ENCODE measurements at regions of chr17 and their contacts with region 1.

Region 1: DNA sequence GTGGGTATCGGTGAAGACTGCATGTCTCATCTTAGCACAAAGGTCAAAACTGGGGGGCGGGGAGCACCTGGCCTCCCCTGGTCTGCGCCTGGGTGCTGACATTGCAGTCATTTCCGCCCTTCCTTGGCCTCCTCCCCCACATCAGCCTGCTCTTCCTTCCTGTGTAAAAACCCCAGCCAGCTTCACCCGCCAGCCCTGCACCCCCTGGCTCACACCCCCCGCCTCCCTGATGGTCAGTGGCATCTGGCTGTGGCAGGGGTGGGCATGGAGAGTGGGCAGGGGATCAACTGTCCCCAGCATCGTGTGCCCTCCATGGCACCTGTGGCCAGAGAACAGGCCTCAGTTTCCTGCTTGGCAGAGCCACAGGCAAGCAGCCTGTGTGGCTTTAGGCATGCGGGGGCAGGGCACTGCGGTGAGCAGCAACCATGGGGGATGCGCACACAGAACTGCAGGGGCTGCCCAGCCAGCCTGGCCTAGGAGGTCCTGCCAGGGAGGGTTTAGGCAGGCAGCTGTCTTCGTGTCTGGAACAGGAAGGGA is 26.5 kb upstream of the LASP1NB start:
- DNase-seq: peak; percentile 75
- H3K4me3 Mint-ChIP-seq: peak overlapping the region; percentile 74
- H3K27ac Mint-ChIP-seq: peak overlapping the region; percentile 94
- H3K4me1 Mint-ChIP-seq: peaks cover 58% of the 10 kb centered on the region
- H3K27me3 Mint-ChIP-seq: no peaks in the 10 kb centered on the region

Region 2: DNA sequence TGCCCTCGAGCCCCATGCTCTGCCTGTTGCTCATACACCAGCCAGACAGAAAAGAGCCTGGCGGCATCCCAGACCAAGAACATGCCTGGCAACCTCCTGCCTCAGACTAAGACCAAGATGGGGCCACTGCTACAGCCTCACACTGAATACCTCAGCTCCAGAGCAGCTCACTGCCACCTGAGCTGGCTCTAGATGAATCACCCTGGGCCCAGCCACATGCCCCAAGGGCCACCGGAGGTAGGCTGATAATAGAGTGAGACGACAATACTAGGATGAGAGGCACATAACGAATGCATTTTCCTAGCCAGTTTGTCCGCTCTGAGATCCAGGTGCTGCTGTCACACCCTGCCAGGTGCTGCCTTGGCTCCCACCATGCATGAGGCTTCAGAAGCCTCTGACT is 112.5 kb before region 1 on chr17:
- intact Hi-C with region 1: no loop called
- DNase-seq: no peak
- H3K4me3 Mint-ChIP-seq: no peak overlapping the region
- H3K27ac Mint-ChIP-seq: no peak overlapping the region
- H3K4me1 Mint-ChIP-seq: no peaks in the 10 kb centered on the region
- H3K27me3 Mint-ChIP-seq: no peaks in the 10 kb centered on the region

Region 3: GRCh38 chr17:38881600-38882191 is 17.2 kb before region 1 on chr17:
- intact Hi-C with region 1: loop called (anchors 2 kb)
- DNase-seq: no peak
- H3K4me3 Mint-ChIP-seq: peak overlapping the region; percentile 53
- H3K27ac Mint-ChIP-seq: peak overlapping the region; percentile 89
- H3K4me1 Mint-ChIP-seq: peaks cover 82% of the 10 kb centered on the region
- H3K27me3 Mint-ChIP-seq: no peaks in the 10 kb centered on the region

Region 4: GRCh38 chr17:38925263-38925995 is 26.5 kb after region 1 on chr17 and contains the start of gene LASP1NB:
- intact Hi-C with region 1: loop called (anchors 1 kb)
- DNase-seq: no peak
- H3K4me3 Mint-ChIP-seq: peak within 1 kb of the TSS; percentile 24
- H3K27ac Mint-ChIP-seq: peak within 1 kb of the TSS; percentile 21
- H3K4me1 Mint-ChIP-seq: peaks cover 24% of the 10 kb centered on the region
- H3K27me3 Mint-ChIP-seq: no peaks in the 10 kb centered on the region